CD8-positive, alpha-beta T cell (primary cell): ENCODE measurements at regions of chr5 and their contacts with region 1.

Region 1: DNA sequence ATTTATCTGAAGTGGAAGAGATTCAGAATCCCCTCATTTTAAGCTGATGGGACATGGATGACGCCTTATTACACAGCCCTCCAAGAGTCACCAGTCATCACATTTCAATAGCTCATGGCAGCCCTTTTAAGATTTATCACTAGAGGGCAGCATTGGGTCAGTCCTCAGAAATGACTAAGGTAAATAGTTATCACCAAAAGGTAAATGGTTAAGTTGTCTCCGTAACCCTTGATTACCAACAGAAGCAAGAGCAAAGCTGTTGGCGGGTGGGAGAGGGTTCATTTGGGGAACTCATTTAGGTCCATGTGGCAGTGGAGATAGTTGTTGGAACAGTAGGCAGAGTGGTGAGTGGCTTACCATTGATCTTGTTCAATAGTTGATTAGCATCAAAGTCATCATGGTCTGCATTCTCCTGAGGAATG is 12.0 kb upstream of the C9 start:
- DNase-seq: peak in 3 of 9 experiments; percentile 14 to 60 (median 54)
- ATAC-seq: no peak
- H3K4me3 ChIP-seq: no peak overlapping the region
- H3K4me3 Mint-ChIP-seq: no peak overlapping the region
- H3K27ac ChIP-seq: no peak overlapping the region
- H3K27ac Mint-ChIP-seq: no peak overlapping the region
- H3K4me1 ChIP-seq: no peaks in the 10 kb centered on the region
- H3K4me1 Mint-ChIP-seq: peaks cover 2% of the 10 kb centered on the region
- H3K27me3 ChIP-seq: no peaks in the 10 kb centered on the region
- H3K27me3 Mint-ChIP-seq: peaks cover 4% of the 10 kb centered on the region
- CTCF ChIP-seq: peak; percentile 61

Region 2: DNA sequence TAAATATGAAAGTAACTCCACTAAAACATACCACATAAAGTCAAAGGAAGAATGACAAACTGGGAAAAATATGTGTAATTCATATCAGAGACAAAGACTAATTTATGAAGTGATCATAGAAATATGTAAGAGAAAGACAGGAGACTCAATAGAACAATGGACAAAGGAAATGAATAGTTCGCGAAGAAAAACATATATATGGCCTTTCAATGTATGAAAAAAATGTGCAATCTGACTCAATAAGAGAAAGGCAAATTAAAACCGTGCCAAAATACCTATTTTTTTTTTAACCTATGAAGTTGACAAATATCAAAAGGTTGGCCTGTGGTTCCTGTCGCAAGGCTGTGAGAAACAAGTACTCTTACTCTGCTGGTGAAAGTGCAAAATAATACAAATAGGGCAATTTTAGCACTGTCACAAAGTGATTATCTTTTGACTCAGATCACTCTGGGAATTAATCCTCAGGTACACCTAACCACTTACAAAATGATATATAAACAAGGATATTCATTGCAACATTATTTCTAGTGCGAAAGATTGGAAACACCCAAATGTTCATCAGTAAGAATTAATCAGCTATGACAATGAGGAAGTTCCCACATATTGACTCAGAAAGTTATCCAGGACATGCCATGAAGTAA is 15.7 kb before region 1 on chr5:
- CTCF ChIA-PET with region 1: interaction called, 10 read pairs
- POLR2A ChIA-PET with region 1: no interaction called
- intact Hi-C with region 1: no loop called
- DNase-seq: no peak
- ATAC-seq: no peak
- H3K4me3 ChIP-seq: no peak overlapping the region
- H3K4me3 Mint-ChIP-seq: no peak overlapping the region
- H3K27ac ChIP-seq: no peak overlapping the region
- H3K27ac Mint-ChIP-seq: no peak overlapping the region
- H3K4me1 ChIP-seq: no peaks in the 10 kb centered on the region
- H3K4me1 Mint-ChIP-seq: peaks cover 3% of the 10 kb centered on the region
- H3K27me3 ChIP-seq: no peaks in the 10 kb centered on the region
- H3K27me3 Mint-ChIP-seq: no peaks in the 10 kb centered on the region
- CTCF ChIP-seq: no peak

Region 3: GRCh38 chr5:39547553-39548154 is 171.3 kb after region 1 on chr5:
- CTCF ChIA-PET with region 1: interaction called, 18 read pairs
- POLR2A ChIA-PET with region 1: no interaction called
- intact Hi-C with region 1: loop called (anchors 1 to 2 kb)
- DNase-seq: peak in 3 of 9 experiments; percentile 11 to 64 (median 45)
- ATAC-seq: peak; percentile 46
- H3K4me3 ChIP-seq: no peak overlapping the region
- H3K4me3 Mint-ChIP-seq: peak overlapping the region; percentile 43
- H3K27ac ChIP-seq: no peak overlapping the region
- H3K27ac Mint-ChIP-seq: no peak overlapping the region
- H3K4me1 ChIP-seq: no peaks in the 10 kb centered on the region
- H3K4me1 Mint-ChIP-seq: peaks cover 6% of the 10 kb centered on the region
- H3K27me3 ChIP-seq: no peaks in the 10 kb centered on the region
- H3K27me3 Mint-ChIP-seq: no peaks in the 10 kb centered on the region
- CTCF ChIP-seq: peak; percentile 72

Region 4: DNA sequence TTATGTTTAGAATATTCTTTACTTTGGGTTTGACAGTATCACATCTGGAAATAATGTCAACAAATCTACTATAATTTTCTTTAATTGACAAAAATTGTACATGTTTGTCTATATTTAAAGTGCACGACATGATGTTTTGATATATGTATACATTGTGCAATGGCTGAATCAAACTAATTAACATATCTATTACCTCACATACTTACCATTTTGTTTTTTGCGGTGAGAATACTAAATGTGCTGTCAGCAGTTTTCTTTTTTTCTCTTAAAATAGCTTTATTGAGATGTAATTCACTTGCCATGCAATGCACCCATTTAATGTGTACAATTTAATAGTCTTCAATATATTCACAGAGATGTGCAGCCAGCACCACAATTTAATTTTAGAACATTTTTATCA is 1847.7 kb after region 1 on chr5:
- CTCF ChIA-PET with region 1: no interaction called
- POLR2A ChIA-PET with region 1: no interaction called
- intact Hi-C with region 1: no loop called
- DNase-seq: no peak
- ATAC-seq: no peak
- H3K4me3 ChIP-seq: no peak overlapping the region
- H3K4me3 Mint-ChIP-seq: no peak overlapping the region
- H3K27ac ChIP-seq: no peak overlapping the region
- H3K27ac Mint-ChIP-seq: no peak overlapping the region
- H3K4me1 ChIP-seq: no peaks in the 10 kb centered on the region
- H3K4me1 Mint-ChIP-seq: no peaks in the 10 kb centered on the region
- H3K27me3 ChIP-seq: no peaks in the 10 kb centered on the region
- H3K27me3 Mint-ChIP-seq: no peaks in the 10 kb centered on the region
- CTCF ChIP-seq: no peak